ENCODE measurements at regions of chr3 and their contacts with region 1.

Region 1: DNA sequence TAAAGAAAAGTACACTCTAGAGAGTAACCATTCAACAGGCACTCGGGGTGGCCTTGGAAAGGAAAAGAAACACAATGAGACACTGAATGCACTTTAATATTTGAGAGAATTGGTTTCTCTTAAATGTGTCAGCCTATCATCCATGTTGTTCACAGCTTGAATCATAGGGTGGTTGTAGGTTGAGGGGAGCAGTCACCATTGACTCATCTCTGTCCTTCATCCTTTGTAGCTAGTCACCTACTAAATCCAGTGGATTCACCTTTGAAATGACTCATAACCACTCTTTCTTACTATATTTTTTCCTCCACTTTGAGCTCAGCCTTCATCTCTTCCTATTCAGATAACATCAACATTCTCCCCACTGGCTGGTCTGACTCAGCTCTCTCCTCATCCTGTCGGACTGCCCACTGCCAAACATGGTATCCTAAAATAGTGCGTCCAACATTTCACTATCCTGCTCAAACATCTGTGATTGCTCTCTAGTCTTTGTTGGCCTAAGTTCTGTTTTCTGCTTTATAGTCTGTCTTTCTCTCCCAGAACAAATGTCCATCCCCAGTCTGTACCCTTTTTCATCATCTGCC is 182.7 kb upstream of the GADL1 start:
- DNase-seq: peak; percentile 79
- H3K4me3 Mint-ChIP-seq: peak overlapping the region; percentile 22
- H3K27ac Mint-ChIP-seq: peak overlapping the region; percentile 83
- H3K4me1 Mint-ChIP-seq: peaks cover 32% of the 10 kb centered on the region
- H3K27me3 Mint-ChIP-seq: no peaks in the 10 kb centered on the region

Region 2: DNA sequence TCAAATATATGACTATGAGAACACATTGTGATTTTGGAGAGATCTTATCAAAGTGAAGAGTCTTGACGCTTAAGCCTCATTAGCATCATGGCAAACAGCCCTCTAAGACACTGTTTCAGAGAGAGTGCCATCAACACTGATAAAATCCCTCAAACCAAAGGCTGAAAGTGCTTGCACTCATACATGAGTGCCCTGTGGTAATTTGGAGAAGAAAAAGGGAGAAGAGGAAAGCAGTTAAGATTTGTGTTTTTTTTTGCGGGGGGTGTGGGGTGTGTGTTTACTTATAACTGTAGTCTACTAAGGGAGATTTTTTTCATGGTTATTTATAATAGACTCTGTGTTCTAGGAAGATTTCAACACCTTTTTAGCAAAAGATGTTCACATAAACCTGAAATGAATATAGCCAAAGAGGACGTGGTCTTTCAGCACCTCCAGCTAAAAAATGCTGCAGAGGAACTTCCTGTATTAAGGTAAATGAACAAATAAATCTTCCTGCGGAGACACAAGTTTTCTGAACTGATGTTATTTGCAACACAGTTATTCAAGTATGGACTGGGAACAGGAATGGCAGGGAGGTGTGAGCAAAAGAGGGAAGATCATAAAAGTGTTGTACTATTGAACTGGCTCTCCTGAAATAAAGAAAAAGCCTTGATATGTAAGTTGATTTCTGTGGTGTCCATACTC is 552.6 kb before region 1 on chr3:
- intact Hi-C with region 1: no loop called
- DNase-seq: peak; percentile 66
- H3K4me3 Mint-ChIP-seq: peak overlapping the region; percentile 3
- H3K27ac Mint-ChIP-seq: no peak overlapping the region
- H3K4me1 Mint-ChIP-seq: peaks cover 9% of the 10 kb centered on the region
- H3K27me3 Mint-ChIP-seq: no peaks in the 10 kb centered on the region

Region 3: DNA sequence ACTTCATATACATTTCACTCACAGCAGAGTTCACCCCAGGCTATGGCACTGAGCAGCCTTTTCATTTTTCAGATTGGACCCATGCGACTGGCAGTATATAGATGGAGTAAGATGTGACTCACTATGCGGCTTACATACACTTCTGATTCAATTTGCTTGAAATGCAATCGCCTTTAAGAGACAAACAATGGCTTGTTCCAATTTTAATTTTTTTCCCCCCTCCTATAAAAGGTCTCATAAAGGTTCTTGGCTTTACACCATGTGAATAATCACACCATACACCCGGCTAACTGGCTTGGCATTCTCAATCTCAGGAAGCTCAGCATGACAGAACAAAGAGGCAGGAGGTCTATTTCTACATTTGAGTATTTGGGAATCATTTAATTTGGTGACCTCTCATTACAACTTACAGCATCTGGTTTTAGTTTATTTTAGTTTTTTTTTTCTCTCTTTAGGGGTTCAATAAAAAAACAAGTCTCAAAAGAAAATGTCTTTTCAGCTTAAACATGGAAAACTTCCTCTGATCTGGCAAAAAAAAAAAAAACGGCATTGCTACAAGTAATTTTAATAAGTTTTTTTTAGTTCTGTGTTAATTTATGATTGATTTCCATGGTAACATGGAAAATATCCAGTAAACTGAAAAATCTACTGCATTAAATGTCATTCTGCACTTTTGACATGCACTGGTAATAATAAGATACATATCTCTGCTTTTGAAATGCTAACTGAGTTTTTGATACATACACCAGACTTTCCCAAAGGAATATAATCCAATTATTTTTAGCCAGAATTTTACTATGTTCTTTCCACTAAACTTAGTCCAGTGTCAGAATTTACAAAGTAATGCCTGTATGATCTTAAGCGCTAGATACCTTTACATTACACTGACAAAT is 221.5 kb before region 1 on chr3:
- intact Hi-C with region 1: no loop called
- DNase-seq: no peak
- H3K4me3 Mint-ChIP-seq: no peak overlapping the region
- H3K27ac Mint-ChIP-seq: no peak overlapping the region
- H3K4me1 Mint-ChIP-seq: no peaks in the 10 kb centered on the region
- H3K27me3 Mint-ChIP-seq: peaks cover 6% of the 10 kb centered on the region

Region 4: DNA sequence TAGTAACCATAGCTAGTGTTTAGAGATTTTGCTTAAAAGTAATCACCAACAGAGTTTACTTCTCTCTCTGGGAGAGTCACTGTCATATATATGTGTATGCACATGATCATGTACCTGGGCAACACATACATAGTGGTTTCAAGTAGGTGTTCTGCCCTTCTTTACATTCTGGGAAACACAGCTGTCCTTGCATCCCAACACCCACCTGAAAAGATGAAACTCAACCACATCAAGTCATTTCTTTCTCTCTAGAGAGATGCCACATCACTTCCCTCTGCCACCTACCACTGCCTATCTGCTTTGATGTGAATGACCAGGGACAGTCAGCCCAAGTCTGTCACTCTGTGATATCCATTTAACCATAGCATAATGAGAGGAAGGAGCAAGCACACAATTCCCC is 26.8 kb before region 1 on chr3:
- intact Hi-C with region 1: loop called (anchors 1 kb)
- DNase-seq: no peak
- H3K4me3 Mint-ChIP-seq: no peak overlapping the region
- H3K27ac Mint-ChIP-seq: no peak overlapping the region
- H3K4me1 Mint-ChIP-seq: peaks cover 4% of the 10 kb centered on the region
- H3K27me3 Mint-ChIP-seq: no peaks in the 10 kb centered on the region

Region 5: DNA sequence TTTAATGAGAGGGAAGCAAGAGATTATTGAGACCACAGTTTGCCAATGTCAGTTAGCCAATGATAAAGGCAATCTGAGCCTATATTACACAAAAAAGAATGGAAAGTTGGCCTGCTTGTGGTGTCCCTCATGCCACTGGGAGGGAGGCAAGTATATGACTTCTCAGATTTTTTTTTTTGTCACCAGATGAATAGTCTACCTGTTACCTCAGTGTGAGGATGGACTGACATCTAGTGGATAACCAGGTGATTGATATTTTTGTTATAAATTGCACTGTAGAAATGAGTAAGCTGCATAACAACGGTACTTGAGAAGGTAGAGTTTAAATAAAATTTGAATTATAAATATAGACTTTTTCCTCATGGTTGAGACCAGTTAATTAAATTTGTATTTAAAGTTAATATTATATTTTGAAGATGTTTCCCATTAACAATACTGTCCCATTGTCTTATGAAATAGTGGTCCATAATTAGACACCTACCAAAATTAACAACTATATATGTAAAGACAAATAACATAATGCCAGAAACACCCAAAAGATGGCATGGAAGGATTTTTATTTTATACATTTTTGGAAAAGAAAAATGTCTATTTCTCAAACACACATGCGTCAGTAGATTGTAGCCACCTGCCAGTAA is 55.1 kb after region 1 on chr3:
- intact Hi-C with region 1: loop called (anchors 1 kb)
- DNase-seq: peak; percentile 69
- H3K4me3 Mint-ChIP-seq: no peak overlapping the region
- H3K27ac Mint-ChIP-seq: no peak overlapping the region
- H3K4me1 Mint-ChIP-seq: peaks cover 3% of the 10 kb centered on the region
- H3K27me3 Mint-ChIP-seq: no peaks in the 10 kb centered on the region

Region 6: GRCh38 chr3:31185062-31185357 is 107.9 kb after region 1 on chr3:
- intact Hi-C with region 1: no loop called
- DNase-seq: no peak
- H3K4me3 Mint-ChIP-seq: no peak overlapping the region
- H3K27ac Mint-ChIP-seq: no peak overlapping the region
- H3K4me1 Mint-ChIP-seq: no peaks in the 10 kb centered on the region
- H3K27me3 Mint-ChIP-seq: peaks cover 2% of the 10 kb centered on the region

Region 7: DNA sequence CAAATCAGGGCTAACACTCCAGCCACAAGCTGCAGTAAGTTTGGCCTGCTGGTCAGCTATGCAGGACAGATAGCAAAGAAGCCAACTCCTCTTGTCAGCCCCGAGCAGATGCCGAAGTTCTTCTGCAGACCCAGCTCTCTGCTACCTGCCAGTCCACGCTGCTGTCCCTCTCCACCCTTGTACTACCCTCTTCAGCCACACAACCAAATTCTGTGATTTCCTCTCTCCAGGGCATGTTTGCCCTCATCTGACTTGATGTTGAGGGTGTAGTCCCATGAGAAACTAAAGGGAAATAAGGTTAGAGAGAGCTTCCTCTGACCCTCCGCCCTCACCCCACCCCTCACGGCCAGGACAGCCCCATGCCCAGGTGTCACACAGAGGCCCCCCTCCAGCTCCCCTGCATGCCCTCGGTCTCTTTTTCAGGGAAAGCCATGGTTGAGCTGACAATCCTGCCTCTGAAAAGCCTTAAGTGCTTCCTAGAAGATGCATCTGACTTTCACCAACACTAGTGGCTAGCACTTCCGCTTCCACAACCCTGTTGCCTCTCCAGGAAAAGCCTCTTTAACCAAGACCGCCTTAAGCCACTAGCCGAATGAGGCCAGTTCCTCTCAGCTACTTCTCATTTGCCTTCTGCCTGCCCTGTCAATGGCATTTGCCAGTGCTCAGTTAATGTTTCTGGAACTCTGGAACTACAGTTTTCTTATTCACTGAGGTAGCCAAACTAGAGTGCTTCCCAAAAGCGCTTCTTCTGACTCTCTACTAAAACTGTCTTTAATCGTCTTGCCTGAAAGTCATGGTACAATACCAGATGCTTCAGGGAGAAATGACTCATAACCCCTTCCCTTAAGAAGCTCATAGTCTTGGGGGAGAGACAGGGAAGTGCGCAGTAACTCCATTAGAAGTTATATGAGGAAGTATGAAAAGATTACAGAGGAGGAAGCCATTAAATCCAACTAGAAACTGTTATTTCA is 155.2 kb after region 1 on chr3:
- intact Hi-C with region 1: loop called (anchors 5 kb)
- DNase-seq: no peak
- H3K4me3 Mint-ChIP-seq: no peak overlapping the region
- H3K27ac Mint-ChIP-seq: peak overlapping the region; percentile 1
- H3K4me1 Mint-ChIP-seq: peaks cover 56% of the 10 kb centered on the region
- H3K27me3 Mint-ChIP-seq: no peaks in the 10 kb centered on the region

Region 8: GRCh38 chr3:31472479-31473390 is 395.6 kb after region 1 on chr3:
- intact Hi-C with region 1: loop called (anchors 2 kb)
- DNase-seq: peak; percentile 70
- H3K4me3 Mint-ChIP-seq: no peak overlapping the region
- H3K27ac Mint-ChIP-seq: peak overlapping the region; percentile 9
- H3K4me1 Mint-ChIP-seq: peaks cover 13% of the 10 kb centered on the region
- H3K27me3 Mint-ChIP-seq: peaks cover 17% of the 10 kb centered on the region

Measured in activated CD4-positive, alpha-beta T cell treated with anti-CD3 and anti-CD28 coated beads, Interleukin-2, amount 10 ng/mL, durations not matched to agents 24 days and 14 days (primary cell).